Posterior vena cava (tissue), 2 donors: ENCODE measurements at regions of chr12 and their contacts with region 1.

Region 1: GRCh38 chr12:93174048-93174447 is 203.7 kb upstream of the NUDT4 start:
- DNase-seq: no peak

Region 2: DNA sequence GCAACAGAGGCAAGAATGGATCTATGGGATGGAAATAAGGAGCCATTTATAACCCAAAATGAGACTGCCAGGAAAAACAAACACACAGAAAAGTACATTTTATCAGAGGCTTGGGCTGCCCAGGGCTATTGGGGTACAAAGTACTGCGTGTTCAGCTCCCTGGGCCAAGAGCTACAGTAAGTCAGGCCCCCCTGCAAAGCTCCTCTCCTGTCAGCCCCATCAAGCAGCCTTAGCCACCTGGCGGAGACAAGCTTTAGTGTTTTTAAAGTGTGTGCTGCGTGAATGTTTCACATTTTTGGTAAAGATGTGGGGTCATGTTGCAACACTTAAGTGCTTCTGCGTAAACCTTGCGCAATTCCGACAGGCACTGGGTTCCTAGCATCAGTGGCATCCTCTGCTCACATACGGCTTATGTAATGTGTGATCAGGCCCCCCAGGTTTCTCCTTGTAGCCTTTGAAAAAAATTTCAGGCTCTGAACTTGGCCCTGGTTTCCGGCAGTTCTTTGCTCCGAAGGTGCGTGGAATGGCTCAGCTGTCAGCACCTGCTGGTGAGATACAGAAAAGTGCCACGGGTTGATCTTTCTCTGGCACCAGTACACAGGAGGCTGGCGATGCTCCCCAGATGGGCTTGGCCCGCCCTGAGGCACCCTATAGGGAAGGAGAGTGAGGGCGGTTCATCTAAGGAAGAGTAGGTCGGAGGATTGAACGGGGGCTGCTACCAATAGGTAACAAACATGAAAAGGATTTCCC is 46.3 kb before region 1 on chr12:
- intact Hi-C with region 1: no loop called
- DNase-seq: no peak

Region 3: GRCh38 chr12:93378373-93379325 is 204.6 kb after region 1 on chr12:
- intact Hi-C with region 1: loop called in 1 of 2 experiments (anchors 10 kb)
- DNase-seq: no peak